HCT116 (cell line): ENCODE measurements at regions of chr11 and their contacts with region 1.

Region 1: GRCh38 chr11:17598700-17599459 is 51.8 kb downstream of the OTOG start:
- DNase-seq: peak; percentile 24
- ATAC-seq: peak; percentile 97
- H3K4me3 ChIP-seq: no peak overlapping the region
- H3K27ac ChIP-seq: no peak overlapping the region
- H3K4me1 ChIP-seq: peaks cover 0 to 7% of the 10 kb centered on the region in 2 experiments; a peak in 2 of 4 replicates
- H3K27me3 ChIP-seq: no peaks in the 10 kb centered on the region
- CTCF ChIP-seq: peak; percentile 89 to 98 (median 95)
- POLR2A ChIP-seq: no peak
- RAD21 ChIP-seq: peak; percentile 94

Region 2: GRCh38 chr11:17722000-17722643 is 123.2 kb after region 1 on chr11:
- CTCF ChIA-PET with region 1: interaction called, 11 read pairs
- POLR2A ChIA-PET with region 1: no interaction called
- RAD21 ChIA-PET with region 1: interaction called in 1 of 2 experiments, 3 read pairs
- intact Hi-C with region 1: loop called (anchors 2 kb)
- DNase-seq: peak; percentile 41
- ATAC-seq: peak; percentile 96
- H3K4me3 ChIP-seq: no peak overlapping the region
- H3K27ac ChIP-seq: no peak overlapping the region
- H3K4me1 ChIP-seq: peaks cover 2 to 10% of the 10 kb centered on the region in 2 experiments; a peak in 3 of 4 replicates
- H3K27me3 ChIP-seq: peaks cover 11% of the 10 kb centered on the region; the same call in 1 of the 2 replicates
- CTCF ChIP-seq: peak; percentile 69 to 87 (median 76)
- POLR2A ChIP-seq: no peak
- RAD21 ChIP-seq: peak; percentile 76

Region 3: GRCh38 chr11:17978553-17979287 is 379.8 kb after region 1 on chr11:
- CTCF ChIA-PET with region 1: interaction called, 11 read pairs
- POLR2A ChIA-PET with region 1: no interaction called
- RAD21 ChIA-PET with region 1: no interaction called
- intact Hi-C with region 1: loop called (anchors 1 kb)
- DNase-seq: no peak
- ATAC-seq: peak; percentile 95
- H3K4me3 ChIP-seq: no peak overlapping the region
- H3K27ac ChIP-seq: no peak overlapping the region
- H3K4me1 ChIP-seq: no peaks in the 10 kb centered on the region
- H3K27me3 ChIP-seq: no peaks in the 10 kb centered on the region
- CTCF ChIP-seq: peak; percentile 72 to 81 (median 78); a peak in 5 of 6 replicates
- POLR2A ChIP-seq: no peak
- RAD21 ChIP-seq: peak; percentile 69